Activated CD8-positive, alpha-beta T cell treated with anti-CD3 and anti-CD28 coated beads for 36 hours (primary cell): ENCODE measurements at regions of chr17 and their contacts with region 1.

Region 1: DNA sequence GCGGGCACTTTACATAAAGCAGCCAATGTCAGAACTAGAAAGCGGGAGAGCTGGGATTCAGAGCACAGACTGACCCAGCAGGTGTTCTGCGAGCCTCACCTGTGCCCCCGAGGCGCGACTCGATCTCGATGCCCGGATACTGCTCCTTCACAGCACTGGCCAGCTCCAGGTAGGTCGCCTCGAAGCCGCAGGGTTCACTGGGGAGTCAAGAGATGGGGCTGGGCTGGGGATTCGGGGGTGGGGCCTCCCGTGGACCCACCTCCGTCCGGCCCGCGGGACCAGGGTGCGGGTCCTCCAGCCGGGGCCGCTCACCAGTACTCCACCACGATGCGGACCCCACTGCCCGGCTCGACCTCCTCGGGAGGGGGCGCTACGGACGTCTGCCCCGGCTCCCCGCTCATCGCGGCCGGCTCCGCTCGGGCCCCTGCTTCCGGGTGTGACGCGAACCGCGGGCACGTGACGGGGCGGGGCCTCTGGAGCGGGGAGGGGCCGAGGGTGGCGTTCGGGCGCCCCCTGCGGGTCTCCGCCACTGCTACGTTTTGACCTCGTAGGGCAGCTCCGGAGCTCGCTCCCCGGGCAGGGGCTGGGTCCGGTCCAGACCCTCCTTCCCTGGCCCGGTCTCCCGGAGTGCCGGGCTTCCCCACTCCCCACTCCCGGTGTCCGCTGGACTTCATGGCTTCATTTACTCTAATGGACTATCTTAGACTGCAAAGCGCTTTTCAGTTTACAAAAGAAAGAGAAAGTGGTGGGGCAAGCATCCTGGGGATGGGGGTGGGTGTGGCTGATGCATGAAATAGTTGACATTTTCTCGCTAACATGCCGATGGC is at the start of gene MIEN1:
- DNase-seq: peak; percentile 94
- ATAC-seq: peak; percentile 96
- H3K4me3 Mint-ChIP-seq: peak within 1 kb of the TSS; percentile 93
- H3K27ac Mint-ChIP-seq: peak within 1 kb of the TSS; percentile 91
- H3K4me1 Mint-ChIP-seq: peaks cover 17% of the 10 kb centered on the region
- H3K27me3 Mint-ChIP-seq: no peaks in the 10 kb centered on the region
- CTCF ChIP-seq: peak; percentile 99
- total RNA-seq, gene MIEN1: 32.5 to 34.0 TPM

Region 2: GRCh38 chr17:39573447-39574298 is 156.6 kb before region 1 on chr17:
- CTCF ChIA-PET with region 1: no interaction called
- POLR2A ChIA-PET with region 1: no interaction called
- intact Hi-C with region 1: no loop called
- DNase-seq: peak; percentile 61
- ATAC-seq: peak; percentile 83
- H3K4me3 Mint-ChIP-seq: peak overlapping the region; percentile 81
- H3K27ac Mint-ChIP-seq: no peak overlapping the region
- H3K4me1 Mint-ChIP-seq: peaks cover 3% of the 10 kb centered on the region
- H3K27me3 Mint-ChIP-seq: peaks cover 7% of the 10 kb centered on the region
- CTCF ChIP-seq: no peak

Region 3: DNA sequence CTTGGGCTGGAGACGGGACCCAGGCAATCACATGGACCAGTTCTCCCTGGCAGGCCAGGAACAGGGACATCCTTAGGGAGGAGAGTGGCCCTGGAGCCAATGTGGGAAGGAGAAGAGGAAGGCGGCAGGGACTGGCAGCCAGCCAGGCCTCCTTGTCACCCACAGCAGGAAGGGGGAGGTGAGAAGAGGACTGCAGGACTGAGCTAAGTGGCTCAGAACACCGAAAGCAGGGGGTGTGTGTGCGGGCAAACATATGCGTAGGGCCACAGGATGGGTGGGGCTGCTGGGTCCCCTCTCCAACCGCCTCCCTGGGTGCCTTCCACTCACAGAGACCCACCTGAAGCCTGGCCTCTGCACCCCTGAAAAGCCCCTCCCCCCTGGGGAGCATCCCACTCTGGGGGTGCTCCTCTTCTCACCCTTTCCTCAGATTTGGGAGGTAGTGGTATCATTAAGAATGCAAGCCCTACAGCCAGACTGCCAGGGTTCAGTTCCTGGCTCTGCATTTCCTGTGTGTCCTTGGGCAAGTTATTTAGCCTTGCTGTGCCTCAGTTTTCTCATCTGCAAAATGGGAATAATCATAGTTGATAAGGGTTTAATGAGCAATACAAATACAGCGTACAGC is 54.0 kb before region 1 on chr17:
- CTCF ChIA-PET with region 1: interaction called, 10 read pairs
- POLR2A ChIA-PET with region 1: interaction called, 3 read pairs
- intact Hi-C with region 1: no loop called
- DNase-seq: peak; percentile 76
- ATAC-seq: peak; percentile 78
- H3K4me3 Mint-ChIP-seq: no peak overlapping the region
- H3K27ac Mint-ChIP-seq: peak overlapping the region; percentile 59
- H3K4me1 Mint-ChIP-seq: peaks cover 65% of the 10 kb centered on the region
- H3K27me3 Mint-ChIP-seq: no peaks in the 10 kb centered on the region
- CTCF ChIP-seq: no peak

Region 4: GRCh38 chr17:39687811-39688518 is 42.3 kb before region 1 on chr17 and contains the start of gene PGAP3:
- CTCF ChIA-PET with region 1: interaction called, 6 read pairs
- POLR2A ChIA-PET with region 1: interaction called, 4 read pairs
- intact Hi-C with region 1: loop called (anchors 5 kb)
- DNase-seq: peak; percentile 96
- ATAC-seq: peak; percentile 97
- H3K4me3 Mint-ChIP-seq: peak within 1 kb of the TSS; percentile 93
- H3K27ac Mint-ChIP-seq: peak within 1 kb of the TSS; percentile 93
- H3K4me1 Mint-ChIP-seq: peaks cover 20% of the 10 kb centered on the region
- H3K27me3 Mint-ChIP-seq: no peaks in the 10 kb centered on the region
- CTCF ChIP-seq: no peak
- total RNA-seq, gene PGAP3: 6.4 to 7.4 TPM

Region 5: DNA sequence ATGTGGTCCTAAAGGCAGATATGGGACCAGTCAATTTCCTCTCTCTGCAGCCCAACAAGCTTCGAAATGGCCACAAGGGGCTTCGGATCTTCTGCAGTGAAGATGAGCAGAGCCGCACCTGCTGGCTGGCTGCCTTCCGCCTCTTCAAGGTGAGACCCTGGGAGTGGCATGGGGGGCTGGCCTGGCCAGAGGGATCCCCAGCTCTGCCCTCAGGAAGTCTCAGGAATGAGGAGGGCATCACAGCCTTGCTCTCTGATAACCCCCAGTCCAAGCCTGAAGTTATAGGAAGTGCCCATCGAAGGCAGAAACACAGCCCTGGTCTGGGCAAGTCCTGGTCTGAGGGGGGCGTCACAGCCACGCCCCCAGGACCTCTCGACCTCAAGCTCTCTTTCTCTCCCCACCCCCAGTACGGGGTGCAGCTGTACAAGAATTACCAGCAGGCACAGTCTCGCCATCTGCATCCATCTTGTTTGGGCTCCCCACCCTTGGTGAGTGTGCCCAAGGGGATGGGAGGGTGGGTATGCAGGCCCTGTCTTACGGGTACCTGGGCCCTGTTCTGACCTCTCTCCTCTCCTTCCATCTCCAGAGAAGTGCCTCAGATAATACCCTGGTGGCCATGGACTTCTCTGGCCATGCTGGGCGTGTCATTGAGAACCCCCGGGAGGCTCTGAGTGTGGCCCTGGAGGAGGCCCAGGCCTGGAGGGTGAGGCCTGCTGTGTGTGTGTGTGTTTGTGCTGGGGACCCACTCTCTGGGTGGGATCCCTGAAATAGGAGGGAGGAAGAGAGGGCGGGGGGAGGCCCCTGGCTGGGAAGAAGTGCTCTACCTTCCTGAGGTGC is 14.7 kb after region 1 on chr17:
- CTCF ChIA-PET with region 1: interaction called, 52 read pairs
- POLR2A ChIA-PET with region 1: interaction called, 13 read pairs
- intact Hi-C with region 1: no loop called
- DNase-seq: no peak
- ATAC-seq: no peak
- H3K4me3 Mint-ChIP-seq: no peak overlapping the region
- H3K27ac Mint-ChIP-seq: no peak overlapping the region
- H3K4me1 Mint-ChIP-seq: peaks cover 7% of the 10 kb centered on the region
- H3K27me3 Mint-ChIP-seq: peaks cover 5% of the 10 kb centered on the region
- CTCF ChIP-seq: no peak

Region 6: GRCh38 chr17:39800540-39800939 is 70.2 kb after region 1 on chr17:
- CTCF ChIA-PET with region 1: no interaction called
- POLR2A ChIA-PET with region 1: no interaction called
- intact Hi-C with region 1: no loop called
- DNase-seq: peak; percentile 72
- ATAC-seq: peak; percentile 97
- H3K4me3 Mint-ChIP-seq: no peak overlapping the region
- H3K27ac Mint-ChIP-seq: peak overlapping the region; percentile 76
- H3K4me1 Mint-ChIP-seq: peaks cover 56% of the 10 kb centered on the region
- H3K27me3 Mint-ChIP-seq: no peaks in the 10 kb centered on the region
- CTCF ChIP-seq: no peak

Region 7: GRCh38 chr17:40303009-40303657 is 572.8 kb after region 1 on chr17:
- CTCF ChIA-PET with region 1: no interaction called
- POLR2A ChIA-PET with region 1: no interaction called
- intact Hi-C with region 1: no loop called
- DNase-seq: peak; percentile 63
- ATAC-seq: peak; percentile 59
- H3K4me3 Mint-ChIP-seq: no peak overlapping the region
- H3K27ac Mint-ChIP-seq: no peak overlapping the region
- H3K4me1 Mint-ChIP-seq: peaks cover 28% of the 10 kb centered on the region
- H3K27me3 Mint-ChIP-seq: no peaks in the 10 kb centered on the region
- CTCF ChIP-seq: peak; percentile 76